GM12878 (cell line): ENCODE measurements at regions of chr2 and their contacts with region 1.

Region 1: DNA sequence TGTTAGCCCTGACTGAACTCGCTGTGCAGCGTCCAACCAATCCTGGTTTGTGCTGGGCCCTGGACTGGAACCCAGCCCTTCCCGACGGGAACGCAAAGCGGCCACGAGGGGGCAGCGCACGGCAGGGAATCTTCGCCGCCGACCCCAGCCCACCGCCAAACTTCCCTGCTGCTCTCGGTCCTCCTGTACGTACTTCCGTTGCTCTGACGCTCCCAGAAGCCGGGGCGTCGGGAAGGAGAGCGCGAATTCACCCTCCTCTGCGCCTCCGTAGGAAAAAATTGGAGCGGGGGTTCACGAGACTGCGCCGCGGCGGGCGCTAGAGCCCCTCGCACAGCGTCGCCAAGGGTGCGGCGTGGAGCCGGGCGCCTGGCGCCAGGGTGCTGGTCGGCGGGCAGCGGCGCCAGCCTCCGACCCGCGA is 948 bp upstream of the SH3RF3 start:
- DNase-seq: no peak
- ATAC-seq: peak; percentile 69
- H3K4me3 ChIP-seq: peak overlapping the region; percentile 67
- H3K27ac ChIP-seq: no peak overlapping the region
- H3K4me1 ChIP-seq: no peaks in the 10 kb centered on the region; the same call in 1 of the 2 replicates
- H3K27me3 ChIP-seq: peaks cover 0 to 2% of the 10 kb centered on the region in 2 experiments; a peak in 3 of 4 replicates
- CTCF ChIP-seq: peak; percentile 69 to 92 (median 76); a peak in 5 of 6 replicates
- EP300 ChIP-seq: no peak; a peak in 1 of 4 replicates
- POLR2A ChIP-seq: no peak
- RAD21 ChIP-seq: peak; percentile 82

Region 2: DNA sequence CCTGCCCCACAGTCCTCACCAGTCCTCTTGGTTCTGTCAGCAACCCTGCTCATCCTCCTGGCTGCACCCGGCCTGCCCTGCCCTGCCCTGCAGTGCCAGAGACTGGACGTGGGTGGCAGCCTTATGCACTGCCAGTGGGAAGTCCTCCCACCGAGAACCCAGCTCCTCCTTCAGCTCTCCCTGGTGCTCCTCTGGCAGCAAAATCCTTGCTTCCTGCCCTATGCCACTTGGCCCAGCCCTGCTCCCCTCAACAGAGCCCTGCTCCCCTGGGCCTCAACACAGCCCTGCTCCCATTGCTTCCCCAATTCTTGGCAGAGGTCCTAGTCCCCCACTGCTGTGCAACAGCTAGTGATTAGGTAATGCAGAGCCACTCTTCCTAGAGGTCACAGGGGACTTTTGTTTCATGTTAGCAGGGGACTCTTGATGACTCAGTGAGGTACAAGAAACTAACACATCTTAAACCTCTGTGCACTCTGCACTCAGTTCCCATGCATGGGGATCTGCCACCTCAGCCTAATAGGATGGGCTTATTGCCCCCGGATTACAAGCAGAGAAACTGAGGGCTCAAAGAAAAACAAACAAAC is 81.0 kb before region 1 on chr2:
- CTCF ChIA-PET with region 1: no interaction called
- POLR2A ChIA-PET with region 1: no interaction called
- RAD21 ChIA-PET with region 1: interaction called, 11 read pairs
- SMC1A ChIA-PET with region 1: no interaction called
- in situ Hi-C with region 1: no loop called
- intact Hi-C with region 1: no loop called
- DNase-seq: peak; percentile 30
- ATAC-seq: peak; percentile 95
- H3K4me3 ChIP-seq: no peak overlapping the region
- H3K27ac ChIP-seq: no peak overlapping the region
- H3K4me1 ChIP-seq: no peaks in the 10 kb centered on the region
- H3K27me3 ChIP-seq: no peaks in the 10 kb centered on the region
- CTCF ChIP-seq: peak in 2 of 3 experiments; percentile 7 to 22; a peak in 2 of 6 replicates
- EP300 ChIP-seq: peak in 1 of 2 experiments; percentile 60; a peak in 1 of 4 replicates
- POLR2A ChIP-seq: no peak
- RAD21 ChIP-seq: no peak

Region 3: GRCh38 chr2:109208081-109208950 is 80.3 kb after region 1 on chr2:
- CTCF ChIA-PET with region 1: interaction called, 12 read pairs
- POLR2A ChIA-PET with region 1: interaction called, 3 read pairs
- RAD21 ChIA-PET with region 1: interaction called, 23 read pairs
- SMC1A ChIA-PET with region 1: interaction called, 48 read pairs
- in situ Hi-C with region 1: no loop called
- intact Hi-C with region 1: loop called (anchors 2 kb)
- DNase-seq: no peak
- ATAC-seq: peak; percentile 49
- H3K4me3 ChIP-seq: no peak overlapping the region
- H3K27ac ChIP-seq: no peak overlapping the region
- H3K4me1 ChIP-seq: peaks cover 5% of the 10 kb centered on the region
- H3K27me3 ChIP-seq: no peaks in the 10 kb centered on the region; a peak in 1 of 4 replicates
- CTCF ChIP-seq: peak; percentile 9 to 37 (median 36); a peak in 3 of 6 replicates
- EP300 ChIP-seq: no peak
- POLR2A ChIP-seq: no peak
- RAD21 ChIP-seq: peak; percentile 45

Region 4: GRCh38 chr2:109238580-109238979 is 110.5 kb after region 1 on chr2:
- CTCF ChIA-PET with region 1: interaction called, 10 read pairs
- POLR2A ChIA-PET with region 1: interaction called, 3 read pairs
- RAD21 ChIA-PET with region 1: interaction called, 5 read pairs
- SMC1A ChIA-PET with region 1: interaction called, 5 read pairs
- in situ Hi-C with region 1: no loop called
- intact Hi-C with region 1: no loop called
- DNase-seq: peak; percentile 59
- ATAC-seq: peak; percentile 97
- H3K4me3 ChIP-seq: no peak overlapping the region
- H3K27ac ChIP-seq: no peak overlapping the region
- H3K4me1 ChIP-seq: peaks cover 11% of the 10 kb centered on the region
- H3K27me3 ChIP-seq: no peaks in the 10 kb centered on the region
- CTCF ChIP-seq: no peak
- EP300 ChIP-seq: peak; percentile 15 to 42; a peak in 2 of 4 replicates
- POLR2A ChIP-seq: no peak
- RAD21 ChIP-seq: peak; percentile 15; the same call in 1 of the 2 replicates

Region 5: DNA sequence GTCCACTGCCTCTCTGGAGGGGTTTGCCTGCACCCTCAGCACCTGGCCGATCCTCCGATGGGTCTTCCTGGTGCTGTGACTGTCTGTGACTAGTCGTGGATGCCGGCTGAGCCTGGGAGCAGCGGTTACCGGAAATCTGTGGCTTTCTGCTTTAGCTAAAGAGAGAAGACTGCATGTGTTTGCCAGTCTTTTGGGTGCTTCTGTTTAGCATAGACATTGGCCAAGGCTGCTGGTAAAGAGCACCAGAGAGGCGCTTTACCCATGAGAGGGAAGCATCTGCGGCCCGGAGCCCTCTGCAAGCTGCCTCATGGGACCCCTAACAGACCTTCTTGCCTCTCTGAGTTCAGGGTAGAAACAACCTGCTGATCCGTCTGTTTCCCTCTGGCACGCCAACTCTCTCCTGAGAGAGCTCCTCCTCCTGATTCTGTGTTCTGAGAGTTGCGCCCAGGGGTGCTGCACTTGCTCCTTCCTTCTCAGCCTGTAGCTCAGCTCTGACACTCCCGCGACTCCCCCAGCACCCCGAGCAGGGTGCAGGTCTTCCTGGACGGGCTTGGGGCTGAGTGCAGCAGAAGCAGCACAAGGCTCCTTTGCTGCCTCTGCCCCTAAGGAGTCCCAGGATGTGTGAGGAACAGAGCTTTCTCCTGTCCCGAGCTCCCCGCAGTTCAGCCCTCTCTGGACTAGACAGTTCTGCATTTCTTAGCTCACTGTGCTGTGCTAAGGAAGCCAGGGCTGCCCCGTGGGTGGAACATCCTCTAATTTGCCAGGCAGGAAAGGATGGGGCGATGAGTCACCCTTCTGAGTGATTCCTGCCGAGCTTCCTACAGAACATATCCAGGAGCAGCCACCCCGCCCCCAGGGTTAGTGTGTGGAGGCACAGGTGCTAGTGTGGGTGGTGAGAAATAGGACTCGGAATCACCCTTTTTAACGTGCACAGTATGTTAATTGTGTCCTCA is 204.1 kb after region 1 on chr2:
- CTCF ChIA-PET with region 1: interaction called, 4 read pairs
- POLR2A ChIA-PET with region 1: no interaction called
- RAD21 ChIA-PET with region 1: interaction called, 3 read pairs
- SMC1A ChIA-PET with region 1: interaction called, 3 read pairs
- in situ Hi-C with region 1: no loop called
- intact Hi-C with region 1: loop called (anchors 2 kb)
- DNase-seq: no peak
- ATAC-seq: peak; percentile 73
- H3K4me3 ChIP-seq: peak overlapping the region; percentile 63
- H3K27ac ChIP-seq: peak overlapping the region; percentile 48; the same call in 1 of the 2 replicates
- H3K4me1 ChIP-seq: peaks cover 35% of the 10 kb centered on the region
- H3K27me3 ChIP-seq: no peaks in the 10 kb centered on the region
- CTCF ChIP-seq: no peak
- EP300 ChIP-seq: no peak
- POLR2A ChIP-seq: no peak
- RAD21 ChIP-seq: no peak

Region 6: DNA sequence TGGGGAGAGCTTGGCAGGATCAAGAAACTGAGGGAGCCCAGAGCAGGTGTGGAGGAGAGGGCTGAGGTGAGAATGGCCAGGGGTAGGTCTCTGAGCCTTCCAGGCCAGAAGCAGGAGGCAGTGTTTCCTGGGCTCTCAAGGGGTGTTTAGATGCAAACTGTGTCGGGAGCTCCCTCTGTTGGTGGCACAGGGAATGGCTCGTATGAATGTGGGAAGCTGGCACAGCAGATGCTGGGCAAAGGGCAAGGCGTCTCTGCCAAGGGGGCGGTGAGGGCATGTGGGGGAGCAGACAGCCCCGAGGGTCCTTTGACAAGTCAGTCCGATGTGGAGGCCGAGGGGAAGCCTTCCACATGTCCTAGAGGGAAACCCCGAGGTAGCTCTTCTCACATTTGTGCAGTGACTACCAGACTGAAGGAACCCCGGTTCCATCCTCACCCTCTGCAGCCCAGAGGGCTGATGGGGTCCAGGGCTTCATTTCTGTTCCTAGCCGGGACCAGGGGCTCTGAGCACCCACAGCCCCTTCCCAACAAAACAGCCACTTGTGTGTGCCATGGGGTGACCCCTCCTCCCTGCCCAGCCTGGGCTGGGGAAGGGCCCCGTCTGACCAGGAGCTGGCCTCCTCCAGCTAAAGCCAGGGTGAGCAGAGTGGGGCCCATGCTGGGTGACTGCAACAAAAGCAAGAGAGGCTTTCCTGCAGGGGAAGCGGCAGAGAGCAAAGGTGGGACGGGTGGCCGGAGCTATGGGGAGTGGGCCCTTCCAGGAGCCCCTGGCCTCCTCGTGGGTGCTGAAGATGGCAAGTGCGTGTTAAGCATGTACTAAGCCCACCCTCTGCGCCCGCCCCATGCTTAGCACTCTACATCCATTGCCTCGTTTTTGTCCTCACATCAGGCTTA is 382.3 kb after region 1 on chr2:
- CTCF ChIA-PET with region 1: interaction called, 62 read pairs
- POLR2A ChIA-PET with region 1: interaction called, 3 read pairs
- RAD21 ChIA-PET with region 1: interaction called, 67 read pairs
- SMC1A ChIA-PET with region 1: interaction called, 44 read pairs
- in situ Hi-C with region 1: loop called (anchors 5 kb)
- intact Hi-C with region 1: loop called (anchors 1 kb)
- DNase-seq: peak; percentile 27
- ATAC-seq: peak; percentile 53
- H3K4me3 ChIP-seq: no peak overlapping the region
- H3K27ac ChIP-seq: no peak overlapping the region
- H3K4me1 ChIP-seq: peaks cover 38% of the 10 kb centered on the region
- H3K27me3 ChIP-seq: no peaks in the 10 kb centered on the region
- CTCF ChIP-seq: peak; percentile 94 to 98 (median 96)
- EP300 ChIP-seq: no peak
- POLR2A ChIP-seq: no peak
- RAD21 ChIP-seq: peak; percentile 92

Region 7: GRCh38 chr2:110173523-110173922 is 1045.5 kb after region 1 on chr2:
- CTCF ChIA-PET with region 1: no interaction called
- POLR2A ChIA-PET with region 1: no interaction called
- RAD21 ChIA-PET with region 1: no interaction called
- SMC1A ChIA-PET with region 1: no interaction called
- in situ Hi-C with region 1: no loop called
- intact Hi-C with region 1: no loop called
- DNase-seq: no peak
- ATAC-seq: no peak
- H3K4me3 ChIP-seq: no peak overlapping the region
- H3K27ac ChIP-seq: no peak overlapping the region
- H3K4me1 ChIP-seq: no peaks in the 10 kb centered on the region
- H3K27me3 ChIP-seq: no peaks in the 10 kb centered on the region
- CTCF ChIP-seq: no peak
- EP300 ChIP-seq: no peak
- POLR2A ChIP-seq: no peak
- RAD21 ChIP-seq: no peak